Natural killer cell (primary cell): ENCODE measurements at regions of chr9 and their contacts with region 1.

Region 1: DNA sequence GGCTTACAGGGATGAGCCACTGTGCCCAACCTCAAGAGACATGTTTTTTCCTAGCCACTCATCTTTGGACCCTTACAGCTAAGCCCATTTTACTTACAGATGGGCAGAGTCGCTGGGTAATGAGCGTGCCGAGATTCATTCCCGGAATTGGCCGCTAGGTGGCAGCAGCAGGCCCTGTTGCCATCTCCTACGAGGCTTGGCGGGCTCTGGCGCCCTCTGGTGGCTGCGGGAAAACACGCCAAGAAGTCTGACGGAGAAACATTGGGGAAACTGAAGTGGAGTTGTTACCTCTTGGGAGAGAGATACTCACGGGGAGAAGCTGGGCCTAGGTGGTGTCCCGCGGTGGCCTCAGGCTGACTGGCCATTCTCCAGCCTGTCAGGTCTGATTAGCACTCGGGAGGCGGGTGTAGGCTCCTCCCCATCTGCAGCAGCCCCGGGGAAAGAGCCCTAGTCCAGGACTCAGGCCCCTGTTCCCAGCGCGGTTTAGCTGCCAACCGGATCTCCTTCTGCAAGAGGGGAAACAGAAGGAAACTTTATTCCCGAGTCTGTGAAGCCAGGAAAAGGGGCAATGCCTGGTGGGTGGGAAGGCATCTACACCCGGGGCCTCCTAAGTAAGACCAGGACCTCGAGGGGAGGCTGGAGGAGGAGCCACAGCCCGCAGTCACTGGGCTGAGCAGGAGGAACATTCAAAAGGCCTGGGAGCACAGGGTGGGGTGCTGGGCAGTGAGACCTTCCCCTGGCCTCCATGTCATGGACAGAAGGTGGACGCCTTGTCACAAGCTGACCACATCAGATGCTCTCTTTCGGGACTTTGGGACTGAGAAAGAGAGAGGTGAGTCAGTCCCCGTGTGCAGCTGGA is 9.7 kb downstream of the PTGES2 start:
- DNase-seq: peak; percentile 98
- ATAC-seq: peak; percentile 93 to 99 (median 96)
- H3K4me3 ChIP-seq: no peak overlapping the region
- H3K4me3 Mint-ChIP-seq: no peak overlapping the region
- H3K27ac ChIP-seq: no peak overlapping the region
- H3K27ac Mint-ChIP-seq: peak overlapping the region; percentile 69
- H3K4me1 ChIP-seq: peaks cover 27% of the 10 kb centered on the region
- H3K4me1 Mint-ChIP-seq: peaks cover 6 to 11% of the 10 kb centered on the region in 2 donors
- H3K27me3 ChIP-seq: no peaks in the 10 kb centered on the region
- H3K27me3 Mint-ChIP-seq: no peaks in the 10 kb centered on the region
- CTCF ChIP-seq: peak; percentile 100

Region 2: GRCh38 chr9:127943731-127944144 is 174.1 kb before region 1 on chr9:
- intact Hi-C with region 1: loop called (anchors 5 kb)
- DNase-seq: peak; percentile 66 to 88
- ATAC-seq: peak; percentile 79 to 93 (median 88)
- H3K4me3 ChIP-seq: no peak overlapping the region
- H3K4me3 Mint-ChIP-seq: no peak overlapping the region
- H3K27ac ChIP-seq: no peak overlapping the region
- H3K27ac Mint-ChIP-seq: no peak overlapping the region
- H3K4me1 ChIP-seq: peaks cover 16% of the 10 kb centered on the region
- H3K4me1 Mint-ChIP-seq: peaks cover 0 to 14% of the 10 kb centered on the region in 2 donors
- H3K27me3 ChIP-seq: no peaks in the 10 kb centered on the region
- H3K27me3 Mint-ChIP-seq: no peaks in the 10 kb centered on the region
- CTCF ChIP-seq: peak; percentile 73

Region 3: GRCh38 chr9:128127990-128128835 is 10.4 kb after region 1 on chr9:
- intact Hi-C with region 1: loop called (anchors 1 kb)
- DNase-seq: peak; percentile 86 to 94
- ATAC-seq: peak; percentile 80 to 91 (median 82)
- H3K4me3 ChIP-seq: peak overlapping the region; percentile 100
- H3K4me3 Mint-ChIP-seq: peak overlapping the region; percentile 99
- H3K27ac ChIP-seq: peak overlapping the region; percentile 98
- H3K27ac Mint-ChIP-seq: peak overlapping the region; percentile 98 to 99
- H3K4me1 ChIP-seq: peaks cover 34% of the 10 kb centered on the region
- H3K4me1 Mint-ChIP-seq: peaks cover 24 to 35% of the 10 kb centered on the region in 2 donors
- H3K27me3 ChIP-seq: no peaks in the 10 kb centered on the region
- H3K27me3 Mint-ChIP-seq: peaks cover 5 to 8% of the 10 kb centered on the region in 2 donors
- CTCF ChIP-seq: no peak